WTC11 (cell line): ENCODE measurements at regions of chr15 and their contacts with region 1.

Region 1: GRCh38 chr15:62254137-62254934 is 89.3 kb upstream of the C2CD4B start:
- DNase-seq: peak; percentile 84
- ATAC-seq: peak; percentile 85
- H3K4me3 Mint-ChIP-seq: no peak overlapping the region
- H3K27ac Mint-ChIP-seq: no peak overlapping the region
- H3K4me1 Mint-ChIP-seq: peaks cover 8% of the 10 kb centered on the region
- H3K27me3 Mint-ChIP-seq: peaks cover 3% of the 10 kb centered on the region; the same call in 1 of the 2 replicates
- CTCF ChIP-seq: peak; percentile 70

Region 2: DNA sequence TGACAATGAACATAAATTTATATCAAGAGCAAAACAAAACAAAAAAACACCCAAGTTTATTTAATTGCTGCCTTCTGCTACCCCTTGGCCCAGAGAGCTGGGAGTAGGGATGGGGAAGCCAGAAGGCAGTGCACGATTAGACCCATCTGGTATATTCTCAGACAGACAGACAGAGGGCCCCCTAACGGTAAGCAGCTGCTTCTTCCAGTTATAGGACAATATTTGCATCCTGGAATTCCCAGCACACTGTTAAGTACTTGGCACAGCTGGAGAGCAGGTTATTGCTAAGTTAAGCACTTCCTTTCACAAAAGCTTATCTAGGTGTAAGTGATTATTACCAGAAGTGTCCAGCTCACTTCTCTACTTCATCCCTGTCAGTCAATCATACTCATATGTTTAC is 128.6 kb before region 1 on chr15:
- CTCF ChIA-PET with region 1: interaction called, 16 read pairs
- POLR2A ChIA-PET with region 1: no interaction called
- DNase-seq: no peak
- ATAC-seq: peak; percentile 62
- H3K4me3 Mint-ChIP-seq: no peak overlapping the region
- H3K27ac Mint-ChIP-seq: no peak overlapping the region
- H3K4me1 Mint-ChIP-seq: peaks cover 21% of the 10 kb centered on the region
- H3K27me3 Mint-ChIP-seq: no peaks in the 10 kb centered on the region
- CTCF ChIP-seq: no peak

Region 3: GRCh38 chr15:62231856-62232255 is 22.5 kb before region 1 on chr15:
- CTCF ChIA-PET with region 1: interaction called, 16 read pairs
- POLR2A ChIA-PET with region 1: no interaction called
- DNase-seq: no peak
- ATAC-seq: no peak
- H3K4me3 Mint-ChIP-seq: no peak overlapping the region
- H3K27ac Mint-ChIP-seq: no peak overlapping the region
- H3K4me1 Mint-ChIP-seq: peaks cover 3% of the 10 kb centered on the region
- H3K27me3 Mint-ChIP-seq: no peaks in the 10 kb centered on the region
- CTCF ChIP-seq: no peak

Region 4: DNA sequence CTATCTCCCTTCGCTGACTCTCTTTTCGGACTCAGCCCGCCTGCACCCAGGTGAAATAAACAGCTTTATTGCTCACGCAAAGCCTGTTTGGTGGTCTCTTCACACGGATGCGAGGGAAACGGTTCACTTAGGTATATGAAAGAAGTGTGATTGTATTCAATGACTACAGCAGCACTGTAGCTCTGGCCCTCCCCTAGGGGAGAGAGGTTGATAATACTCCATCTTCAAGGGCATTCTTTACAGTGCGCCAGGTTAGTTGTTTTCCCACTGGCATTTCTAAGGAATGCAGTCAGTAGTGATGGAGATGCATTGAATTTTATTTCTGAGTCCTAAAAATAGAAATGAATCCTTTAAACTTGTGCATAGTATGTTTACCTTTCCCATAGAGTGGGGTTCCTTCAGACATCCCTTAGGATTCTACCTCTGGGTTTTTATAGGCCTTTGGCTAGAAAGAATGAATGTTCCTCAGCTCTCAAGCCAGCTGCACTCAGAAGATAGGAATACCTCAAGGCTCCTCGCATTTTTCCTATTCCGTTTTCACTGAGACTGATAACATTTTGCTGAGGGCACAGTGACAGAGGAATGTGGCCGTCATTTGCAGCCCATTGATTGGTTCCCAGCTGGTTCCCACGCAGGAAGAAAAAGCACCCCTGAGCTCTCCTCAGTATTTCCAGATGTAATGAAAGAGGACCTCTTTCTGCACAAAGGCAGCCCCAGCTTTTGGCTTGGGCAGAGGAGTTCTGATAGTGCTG is 42.6 kb after region 1 on chr15:
- CTCF ChIA-PET with region 1: interaction called, 10 read pairs
- POLR2A ChIA-PET with region 1: no interaction called
- DNase-seq: no peak
- ATAC-seq: peak; percentile 86
- H3K4me3 Mint-ChIP-seq: peak overlapping the region; percentile 36
- H3K27ac Mint-ChIP-seq: peak overlapping the region; percentile 97
- H3K4me1 Mint-ChIP-seq: peaks cover 66% of the 10 kb centered on the region
- H3K27me3 Mint-ChIP-seq: peaks cover 2% of the 10 kb centered on the region; the same call in 1 of the 2 replicates
- CTCF ChIP-seq: no peak

Region 5: DNA sequence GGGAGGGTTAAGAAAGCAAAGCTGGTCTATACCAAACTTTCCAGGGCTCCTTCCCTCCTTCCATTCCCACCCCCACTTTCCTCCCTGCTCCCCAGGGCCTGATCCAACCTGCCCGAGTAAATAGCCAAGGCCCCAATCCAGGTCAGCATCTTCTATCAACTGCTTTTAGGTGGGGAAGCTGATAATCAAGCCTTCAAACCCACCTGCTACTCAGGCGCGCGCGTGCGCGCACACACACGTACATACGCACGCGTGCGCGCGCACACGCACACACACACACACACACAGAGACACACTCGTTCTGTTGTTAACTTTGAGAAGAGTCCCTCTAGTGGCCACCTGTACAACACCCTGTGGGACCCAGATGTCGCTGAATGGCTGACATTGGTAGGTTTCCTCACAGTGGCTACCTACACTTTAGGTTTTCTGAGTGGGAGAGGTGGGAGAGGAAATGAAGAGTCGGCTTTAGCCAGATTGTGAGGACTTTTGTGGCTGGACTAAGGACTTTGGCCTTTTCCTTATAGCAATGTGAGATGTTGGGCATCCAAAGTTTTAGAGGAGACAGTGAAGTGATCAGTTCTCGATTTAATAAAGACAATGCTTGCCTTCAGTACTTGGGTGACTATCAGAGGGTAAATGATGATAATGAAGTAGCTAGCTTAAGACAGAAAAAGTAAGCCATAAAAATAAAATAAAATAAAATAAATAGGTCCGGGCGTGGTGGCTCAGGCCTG is 90.6 kb after region 1 on chr15:
- CTCF ChIA-PET with region 1: no interaction called
- POLR2A ChIA-PET with region 1: no interaction called
- DNase-seq: peak; percentile 78
- ATAC-seq: peak; percentile 96
- H3K4me3 Mint-ChIP-seq: peak overlapping the region; percentile 63
- H3K27ac Mint-ChIP-seq: peak overlapping the region; percentile 55; the same call in 1 of the 2 replicates
- H3K4me1 Mint-ChIP-seq: peaks cover 3% of the 10 kb centered on the region
- H3K27me3 Mint-ChIP-seq: no peaks in the 10 kb centered on the region
- CTCF ChIP-seq: peak; percentile 73